Cardiac septum (tissue), 1 donor: ENCODE measurements at regions of chr14 and their contacts with region 1.

Region 1: DNA sequence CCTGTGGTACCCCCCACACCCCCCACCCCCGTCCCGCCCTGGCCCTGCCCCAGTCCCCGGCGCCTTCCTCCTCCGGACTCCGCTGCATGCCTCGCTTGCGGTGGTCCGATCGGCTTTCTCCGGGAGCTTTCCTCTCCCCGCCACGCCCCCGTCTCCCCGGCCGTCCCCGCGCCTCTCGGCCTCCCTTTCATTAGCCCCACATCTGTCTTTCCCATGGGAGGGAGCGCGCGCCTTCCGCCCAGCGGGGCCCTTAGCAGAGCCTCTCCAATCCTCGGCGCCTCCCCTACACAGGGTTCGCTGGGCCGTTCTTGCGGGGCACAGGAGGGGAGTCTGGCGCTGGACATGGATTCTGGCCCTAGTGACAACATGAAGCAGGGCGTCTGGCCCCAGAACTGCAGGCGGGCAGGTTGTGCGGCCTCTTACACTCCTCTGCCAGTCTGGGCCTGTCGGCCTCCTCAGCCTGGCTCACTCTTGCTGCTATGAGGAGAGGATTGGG is 1.5 kb upstream of the EFS start:
- DNase-seq: no peak

Region 2: GRCh38 chr14:23269193-23269592 is 97.3 kb before region 1 on chr14:
- intact Hi-C with region 1: loop called (anchors 10 kb)
- DNase-seq: no peak

Region 3: DNA sequence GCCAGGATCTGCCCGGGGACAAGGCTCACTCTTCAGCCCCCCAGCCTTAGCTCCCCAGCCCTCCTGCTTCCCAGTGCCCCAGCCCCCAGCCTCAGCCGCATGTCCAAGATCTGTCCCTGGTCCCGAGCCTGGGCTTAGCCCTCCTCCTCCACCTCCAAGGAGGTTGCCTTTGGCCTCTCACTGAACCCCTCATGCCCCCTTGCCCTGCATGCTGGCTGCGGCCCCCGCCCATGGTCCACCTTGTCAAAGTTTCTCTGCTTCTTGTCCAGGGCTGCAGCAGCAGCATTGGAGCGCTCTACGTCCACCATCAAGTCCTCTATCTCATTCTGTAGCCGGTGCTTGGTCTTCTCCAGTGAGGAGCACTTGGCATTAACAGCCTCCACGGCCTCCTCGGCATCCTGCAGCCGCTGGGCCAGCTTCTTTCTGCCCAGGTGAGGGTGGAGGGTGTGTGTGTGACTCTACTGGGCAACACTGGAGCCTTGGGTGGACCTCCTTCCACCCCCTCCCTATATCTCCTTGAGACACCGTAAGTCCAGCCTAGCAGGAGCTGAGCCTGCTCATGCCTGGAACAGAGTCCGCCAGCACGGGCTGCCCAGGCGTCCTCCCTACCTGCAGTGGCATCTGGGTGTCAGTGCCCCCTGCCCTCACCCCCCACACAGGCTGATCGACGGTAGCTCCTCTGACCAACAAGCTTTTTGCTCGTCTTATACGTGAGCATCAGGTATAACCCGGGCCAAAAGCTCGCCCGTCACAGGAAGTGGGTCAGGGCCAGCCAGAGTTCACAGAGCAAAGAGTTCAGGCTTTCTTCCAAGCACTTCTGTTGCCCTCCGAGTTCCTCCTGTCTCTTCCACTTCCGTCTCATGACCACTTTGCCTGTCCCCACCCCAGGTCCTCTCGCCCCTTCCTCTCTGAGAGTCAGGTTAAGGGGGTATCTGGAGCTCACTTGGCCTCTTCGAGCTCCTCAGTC is 21.7 kb after region 1 on chr14:
- intact Hi-C with region 1: no loop called
- DNase-seq: no peak